Right ventricle myocardium superior (tissue), 1 donor: ENCODE measurements at regions of chr12 and their contacts with region 1.

Region 1: GRCh38 chr12:62813031-62813829 is 121.7 kb downstream of the PPM1H start:
- DNase-seq: peak; percentile 78
- ATAC-seq: peak; percentile 86

Region 2: DNA sequence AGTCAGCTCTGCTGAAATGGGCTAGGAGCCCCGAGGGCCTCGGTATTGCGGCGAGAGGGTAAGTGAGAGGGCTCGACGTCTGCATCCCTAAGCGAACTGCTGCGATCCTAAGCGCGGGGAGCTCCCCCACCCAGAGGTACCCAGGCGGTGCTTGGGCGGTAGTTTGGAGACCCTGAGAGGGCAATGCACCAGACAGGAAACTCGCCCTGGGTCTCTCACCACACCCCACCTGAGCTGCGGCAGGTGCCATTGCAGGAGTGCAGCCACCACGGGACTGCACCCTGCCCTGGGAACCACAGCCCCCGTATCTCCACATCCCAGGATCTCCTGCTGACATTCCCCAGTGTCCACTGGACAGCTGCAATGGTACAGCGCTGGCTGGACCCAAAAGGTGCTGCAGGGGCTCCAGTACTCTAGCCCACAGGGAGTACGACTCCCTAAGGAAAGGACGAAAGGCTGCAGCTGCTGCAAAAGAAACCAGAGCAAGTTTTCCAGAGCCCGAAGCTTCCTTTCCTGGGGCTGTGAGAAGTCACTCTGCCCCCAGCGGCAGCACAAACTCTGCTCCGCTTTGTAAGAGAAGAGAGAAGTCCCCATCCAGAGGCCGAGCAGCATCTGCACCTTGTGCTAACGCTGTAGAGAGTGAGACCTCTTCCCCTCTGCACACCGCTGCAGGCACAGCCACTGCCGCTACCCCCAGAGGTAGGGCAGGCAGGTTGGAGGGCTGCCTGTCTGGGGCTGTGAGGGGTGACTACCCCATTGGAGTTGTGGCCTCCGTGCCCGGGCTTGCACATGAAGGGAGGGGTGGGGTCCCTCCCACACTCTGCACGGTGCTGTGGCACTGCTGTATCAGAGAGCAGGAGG is 377.7 kb before region 1 on chr12:
- intact Hi-C with region 1: loop called (anchors 5 kb)
- DNase-seq: peak; percentile 61
- ATAC-seq: peak; percentile 85

Region 3: DNA sequence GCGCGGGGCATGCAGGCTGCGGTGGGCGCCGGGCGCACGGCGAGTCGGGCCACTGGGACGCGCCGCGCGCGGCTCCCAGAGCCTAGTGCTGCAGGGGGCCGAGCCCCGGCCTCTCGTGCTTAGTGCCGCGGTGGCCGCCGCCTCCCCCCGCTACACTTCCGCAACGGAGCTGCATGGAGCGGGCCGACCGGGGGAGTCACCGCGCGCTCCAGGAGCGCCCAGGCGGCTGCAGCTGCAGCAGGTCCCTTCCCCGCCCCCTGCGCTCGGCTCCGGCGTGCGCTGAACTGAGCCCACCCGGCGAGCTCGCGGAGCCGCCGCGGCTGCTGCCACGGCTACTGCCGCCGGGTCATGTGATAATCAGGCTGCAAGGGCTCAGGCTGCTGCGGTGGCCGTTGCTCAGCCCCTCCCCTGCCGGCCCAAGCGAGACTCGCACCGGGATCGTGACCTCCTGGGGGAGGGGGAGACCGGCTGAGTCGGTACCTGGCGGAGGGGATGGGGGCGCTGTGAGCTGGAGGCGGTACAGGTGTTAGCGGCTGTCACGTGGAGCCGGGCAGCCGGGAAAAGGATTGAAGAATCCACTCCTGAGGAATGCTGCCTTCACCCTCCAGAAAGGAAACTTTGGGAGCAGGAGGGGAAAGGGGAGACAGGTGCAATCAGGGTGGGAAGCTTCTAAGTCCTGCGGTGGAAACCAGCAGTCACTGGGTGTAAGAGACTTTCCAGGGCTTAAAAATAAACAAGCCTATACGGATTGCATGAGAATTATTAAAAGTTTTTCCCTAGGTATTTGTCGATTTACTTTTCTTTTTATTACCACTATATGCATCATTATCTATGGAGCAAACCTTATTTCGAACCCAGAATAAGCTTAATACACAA is 121.8 kb after region 1 on chr12 and contains the start of gene PPM1H:
- intact Hi-C with region 1: loop called (anchors 5 kb)
- DNase-seq: peak; percentile 81
- ATAC-seq: peak; percentile 91
- total RNA-seq, gene PPM1H: 6.5 TPM

Region 4: DNA sequence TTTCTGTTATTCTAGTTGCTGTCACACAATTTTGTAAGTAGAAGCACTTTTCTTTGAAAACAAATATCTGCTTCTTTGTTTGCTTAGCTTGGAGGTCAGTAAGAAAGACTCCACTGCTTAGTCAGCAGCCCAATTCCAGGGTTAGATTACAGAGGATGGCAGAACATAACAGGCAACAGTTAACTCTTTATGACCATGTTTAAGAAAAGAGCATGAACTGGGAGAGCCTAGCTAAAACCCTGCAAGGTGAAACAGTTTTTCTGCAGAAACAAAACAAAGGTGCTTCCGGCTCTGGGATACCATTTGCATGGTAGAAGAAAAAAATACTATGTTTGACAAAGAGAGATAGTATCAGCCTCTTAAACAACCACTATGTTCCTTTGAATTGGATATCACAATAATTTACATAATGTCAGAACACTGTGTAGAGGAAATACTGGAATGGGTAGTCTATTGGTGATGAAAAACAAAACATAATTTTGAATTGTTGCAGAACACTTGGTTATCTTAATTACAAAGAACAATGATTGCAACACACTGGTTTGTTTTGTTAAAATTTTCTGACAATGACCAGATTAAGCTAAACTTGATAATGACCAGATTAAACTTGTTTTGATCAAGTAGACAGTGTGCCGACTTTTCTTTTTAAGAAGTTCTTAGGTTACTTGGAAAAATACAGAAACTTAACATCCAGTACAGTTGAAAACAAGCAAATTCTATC is 144.2 kb after region 1 on chr12:
- intact Hi-C with region 1: no loop called
- DNase-seq: no peak
- ATAC-seq: no peak